IMR-90 (cell line): ENCODE measurements at regions of chr1 and their contacts with region 1.

Region 1: DNA sequence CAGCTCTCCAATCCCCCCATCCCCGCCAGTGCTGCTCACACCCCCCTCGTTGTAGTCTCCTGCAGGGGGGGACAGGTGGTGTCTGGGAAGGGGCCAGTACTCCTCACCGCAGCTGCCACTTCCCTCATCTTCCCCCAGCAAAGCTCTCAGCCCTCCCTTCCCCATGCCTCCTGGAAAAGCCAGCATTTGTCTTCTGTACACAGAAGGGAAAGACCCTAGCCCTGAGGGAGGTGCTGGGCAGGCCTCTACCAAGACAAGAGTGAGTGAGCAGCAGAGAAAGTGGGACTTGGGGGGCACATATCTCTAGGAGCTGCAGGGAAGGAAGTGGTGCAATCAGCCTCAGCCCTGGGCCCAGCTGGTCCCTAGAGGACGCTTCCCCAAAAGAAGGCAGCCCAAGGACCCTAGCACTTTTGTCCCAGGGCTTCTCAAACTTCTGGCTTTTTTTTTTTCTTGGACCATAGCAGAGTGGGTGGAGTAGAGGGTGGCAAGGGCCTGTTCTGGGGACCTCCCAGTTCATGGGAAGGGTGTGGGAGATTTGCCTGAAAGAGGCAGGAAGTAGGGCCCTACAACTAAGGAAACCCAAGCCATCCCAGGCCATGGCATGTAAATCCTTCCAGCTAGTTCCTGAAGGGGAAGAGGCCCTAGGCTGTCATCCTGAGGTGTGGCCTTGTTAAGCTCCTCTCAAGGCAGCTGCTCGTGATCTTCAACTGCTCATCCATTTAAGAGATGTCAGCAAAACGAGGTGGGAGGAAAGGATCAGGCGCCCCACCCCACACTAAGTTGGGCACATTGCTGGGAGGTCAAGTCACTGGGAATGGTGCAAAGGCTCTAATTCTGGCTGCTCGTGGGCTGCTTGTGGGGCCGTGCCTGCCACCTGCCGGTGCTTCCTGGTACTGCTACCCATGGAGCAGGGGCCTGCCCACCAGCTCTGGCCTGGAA is 12.6 kb downstream of the ZC3H12A start:
- DNase-seq: peak; percentile 65
- ATAC-seq: peak; percentile 88
- H3K4me3 ChIP-seq: no peak overlapping the region
- H3K27ac ChIP-seq: peak overlapping the region; percentile 50; the same call in 1 of the 2 replicates
- H3K4me1 ChIP-seq: peaks cover 22% of the 10 kb centered on the region
- H3K27me3 ChIP-seq: no peaks in the 10 kb centered on the region
- CTCF ChIP-seq: peak; percentile 89
- POLR2A ChIP-seq: no peak
- RAD21 ChIP-seq: peak; percentile 81

Region 2: DNA sequence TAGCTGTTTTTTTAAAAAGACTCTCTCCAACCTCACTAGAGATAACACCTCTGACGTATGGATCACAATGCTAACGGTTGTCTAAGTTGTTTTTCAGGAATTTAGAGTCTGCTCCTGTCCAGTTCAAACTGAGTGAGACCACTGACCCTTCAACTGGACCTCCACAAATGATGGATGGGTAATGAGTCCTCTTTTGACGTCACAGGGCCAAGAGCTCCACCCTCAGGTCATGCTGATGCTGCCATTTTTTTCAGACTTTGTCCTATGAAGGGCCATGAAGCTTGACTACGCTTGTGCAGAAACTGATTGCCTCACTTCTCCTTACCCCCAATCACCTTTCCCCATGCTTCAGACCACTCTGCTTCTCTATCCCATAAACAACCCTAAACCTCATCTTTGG is 469.2 kb before region 1 on chr1:
- CTCF ChIA-PET with region 1: no interaction called
- POLR2A ChIA-PET with region 1: no interaction called
- dilution Hi-C with region 1: no loop called
- in situ Hi-C with region 1: no loop called
- intact Hi-C with region 1: no loop called
- DNase-seq: no peak
- ATAC-seq: no peak
- H3K4me3 ChIP-seq: no peak overlapping the region
- H3K27ac ChIP-seq: no peak overlapping the region
- H3K4me1 ChIP-seq: no peaks in the 10 kb centered on the region
- H3K27me3 ChIP-seq: no peaks in the 10 kb centered on the region
- CTCF ChIP-seq: no peak
- POLR2A ChIP-seq: no peak
- RAD21 ChIP-seq: no peak

Region 3: GRCh38 chr1:37449936-37450335 is 37.0 kb before region 1 on chr1:
- CTCF ChIA-PET with region 1: interaction called, 49 read pairs
- POLR2A ChIA-PET with region 1: interaction called, 3 read pairs
- dilution Hi-C with region 1: no loop called
- in situ Hi-C with region 1: loop called (anchors 5 kb)
- intact Hi-C with region 1: loop called (anchors 1 kb)
- DNase-seq: no peak
- ATAC-seq: no peak
- H3K4me3 ChIP-seq: no peak overlapping the region
- H3K27ac ChIP-seq: no peak overlapping the region
- H3K4me1 ChIP-seq: peaks cover under 1% of the 10 kb centered on the region
- H3K27me3 ChIP-seq: peaks cover 15% of the 10 kb centered on the region
- CTCF ChIP-seq: no peak
- POLR2A ChIP-seq: no peak
- RAD21 ChIP-seq: no peak

Region 4: DNA sequence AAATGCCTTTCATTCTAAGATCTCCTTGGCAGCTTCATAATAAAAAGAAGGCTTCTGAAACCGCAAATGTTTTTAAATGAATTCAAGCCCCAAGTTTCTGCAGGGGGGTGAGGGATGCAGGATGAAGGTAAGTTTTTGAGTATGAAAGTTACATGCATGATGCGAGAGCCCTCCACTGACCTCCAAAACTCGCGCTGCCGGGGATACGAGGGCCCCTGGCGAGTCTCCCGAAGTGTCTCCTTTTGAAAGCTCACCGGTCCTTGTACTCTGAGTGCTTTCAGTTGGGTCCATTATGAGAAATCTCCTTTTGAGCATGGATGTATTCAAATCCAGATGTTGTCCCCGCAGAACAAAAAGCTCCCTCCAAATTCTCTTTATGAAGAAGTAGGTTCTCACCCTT is 31.4 kb before region 1 on chr1:
- CTCF ChIA-PET with region 1: interaction called, 49 read pairs
- POLR2A ChIA-PET with region 1: interaction called, 3 read pairs
- dilution Hi-C with region 1: no loop called
- in situ Hi-C with region 1: loop called (anchors 5 kb)
- intact Hi-C with region 1: loop called (anchors 1 kb)
- DNase-seq: no peak
- ATAC-seq: no peak
- H3K4me3 ChIP-seq: no peak overlapping the region
- H3K27ac ChIP-seq: no peak overlapping the region
- H3K4me1 ChIP-seq: peaks cover 4% of the 10 kb centered on the region
- H3K27me3 ChIP-seq: no peaks in the 10 kb centered on the region
- CTCF ChIP-seq: no peak
- POLR2A ChIP-seq: no peak
- RAD21 ChIP-seq: no peak

Region 5: GRCh38 chr1:37465593-37466517 is 21.1 kb before region 1 on chr1:
- CTCF ChIA-PET with region 1: interaction called, 20 read pairs
- POLR2A ChIA-PET with region 1: no interaction called
- dilution Hi-C with region 1: no loop called
- in situ Hi-C with region 1: no loop called
- intact Hi-C with region 1: no loop called
- DNase-seq: peak; percentile 49
- ATAC-seq: no peak
- H3K4me3 ChIP-seq: no peak overlapping the region
- H3K27ac ChIP-seq: peak overlapping the region; percentile 75; the same call in 1 of the 2 replicates
- H3K4me1 ChIP-seq: peaks cover 7% of the 10 kb centered on the region
- H3K27me3 ChIP-seq: no peaks in the 10 kb centered on the region
- CTCF ChIP-seq: no peak
- POLR2A ChIP-seq: no peak
- RAD21 ChIP-seq: no peak

Region 6: GRCh38 chr1:37474046-37474759 is 12.7 kb before region 1 on chr1 and contains the start of gene ZC3H12A:
- CTCF ChIA-PET with region 1: interaction called, 24 read pairs
- POLR2A ChIA-PET with region 1: interaction called, 10 read pairs
- dilution Hi-C with region 1: no loop called
- in situ Hi-C with region 1: no loop called
- intact Hi-C with region 1: no loop called
- DNase-seq: peak; percentile 86
- ATAC-seq: peak; percentile 73
- H3K4me3 ChIP-seq: peak within 1 kb of the TSS; percentile 95
- H3K27ac ChIP-seq: peak within 1 kb of the TSS; percentile 91
- H3K4me1 ChIP-seq: peaks cover 53% of the 10 kb centered on the region
- H3K27me3 ChIP-seq: no peaks in the 10 kb centered on the region
- CTCF ChIP-seq: no peak
- POLR2A ChIP-seq: peak; percentile 99
- RAD21 ChIP-seq: no peak
- total RNA-seq, gene ZC3H12A: 3.1 and 3.8 TPM in 2 replicates

Region 7: DNA sequence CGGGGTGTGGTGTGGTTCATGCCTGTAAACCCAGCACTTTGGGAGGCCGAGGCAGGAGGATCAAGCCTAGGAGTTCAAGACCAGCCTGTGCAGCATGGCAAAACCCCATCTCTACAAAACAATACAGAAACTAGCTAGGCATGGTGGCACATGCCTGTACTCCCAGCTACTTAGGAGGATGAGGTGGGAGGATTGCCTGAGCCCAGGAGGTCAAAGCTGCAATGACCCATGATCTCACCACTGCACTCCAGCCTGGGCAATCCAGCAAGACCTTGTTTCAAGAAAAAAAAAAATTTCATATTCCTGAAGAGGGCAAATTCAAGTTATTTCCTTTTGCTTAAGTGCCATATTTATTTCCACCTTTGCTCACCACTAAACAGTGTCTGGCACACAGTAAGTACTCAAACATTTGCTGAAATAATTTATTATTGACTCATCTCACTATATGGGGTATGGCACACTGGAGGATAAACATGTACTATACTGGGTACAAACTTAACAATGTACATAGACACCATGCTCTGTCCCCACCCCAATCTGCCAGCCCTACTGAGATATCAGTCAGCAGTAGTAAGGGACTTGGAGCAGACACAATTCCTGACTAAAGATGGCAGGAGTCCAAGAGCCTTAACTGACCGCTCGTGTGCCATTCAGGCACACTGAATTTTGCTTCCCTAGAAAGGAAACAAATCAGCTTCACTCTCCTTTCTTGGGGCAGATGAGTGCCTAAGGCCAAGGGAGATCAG is 12.1 kb after region 1 on chr1:
- CTCF ChIA-PET with region 1: interaction called, 13 read pairs
- POLR2A ChIA-PET with region 1: interaction called, 3 read pairs
- dilution Hi-C with region 1: no loop called
- in situ Hi-C with region 1: no loop called
- intact Hi-C with region 1: no loop called
- DNase-seq: peak; percentile 70
- ATAC-seq: peak; percentile 72
- H3K4me3 ChIP-seq: no peak overlapping the region
- H3K27ac ChIP-seq: no peak overlapping the region; the same call in 1 of the 2 replicates
- H3K4me1 ChIP-seq: no peaks in the 10 kb centered on the region
- H3K27me3 ChIP-seq: no peaks in the 10 kb centered on the region
- CTCF ChIP-seq: no peak
- POLR2A ChIP-seq: no peak
- RAD21 ChIP-seq: no peak